Posterior vena cava (tissue), 2 donors: ENCODE measurements at regions of chr3 and their contacts with region 1.

Region 1: DNA sequence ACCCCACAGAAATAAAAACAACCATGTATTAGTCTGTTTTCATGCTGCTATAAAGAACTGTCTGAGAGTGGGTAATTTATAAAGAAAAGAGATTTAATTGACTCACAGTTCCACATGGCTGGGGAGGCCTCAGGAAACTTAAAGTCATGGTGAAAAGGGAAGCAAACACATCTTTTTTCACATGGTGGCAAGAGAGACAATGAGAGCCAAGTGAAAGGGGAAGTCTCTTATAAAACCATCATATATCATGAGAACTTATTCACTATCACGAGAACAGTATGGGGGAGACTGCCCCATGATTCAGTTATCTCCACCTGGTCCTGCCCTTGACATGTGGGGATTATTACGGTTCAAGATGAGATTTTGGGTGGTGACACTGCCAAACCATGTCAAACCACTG is 141.5 kb downstream of the ZMAT3 start:
- DNase-seq: no peak

Region 2: DNA sequence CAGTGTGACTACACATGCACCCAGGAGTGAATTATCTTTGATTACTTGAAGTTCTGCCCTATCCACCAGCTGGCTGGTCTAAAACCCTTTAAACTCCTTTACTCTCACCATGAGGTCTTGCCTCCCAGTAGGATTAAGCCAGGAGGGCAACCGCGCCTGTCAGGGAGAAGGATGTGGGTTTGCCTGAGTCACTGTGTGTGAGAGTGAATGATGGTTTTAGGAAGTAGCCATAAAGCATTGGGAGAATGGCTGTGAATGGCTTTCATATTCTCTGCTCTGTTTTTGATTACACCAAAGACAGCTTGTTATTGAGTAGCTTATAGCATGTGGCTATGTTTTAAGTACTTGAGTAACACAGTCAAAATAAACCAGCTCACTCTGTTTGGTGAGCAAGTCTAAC is 1095.1 kb before region 1 on chr3:
- intact Hi-C with region 1: no loop called
- DNase-seq: no peak

Region 3: GRCh38 chr3:178900029-178900646 is 30.0 kb before region 1 on chr3:
- intact Hi-C with region 1: loop called in 1 of 2 experiments (anchors 2 kb)
- DNase-seq: no peak

Region 4: GRCh38 chr3:178947738-178948137 is 17.6 kb after region 1 on chr3:
- intact Hi-C with region 1: no loop called
- DNase-seq: no peak